ENCODE measurements at regions of chr1 and their contacts with region 1.

Region 1: DNA sequence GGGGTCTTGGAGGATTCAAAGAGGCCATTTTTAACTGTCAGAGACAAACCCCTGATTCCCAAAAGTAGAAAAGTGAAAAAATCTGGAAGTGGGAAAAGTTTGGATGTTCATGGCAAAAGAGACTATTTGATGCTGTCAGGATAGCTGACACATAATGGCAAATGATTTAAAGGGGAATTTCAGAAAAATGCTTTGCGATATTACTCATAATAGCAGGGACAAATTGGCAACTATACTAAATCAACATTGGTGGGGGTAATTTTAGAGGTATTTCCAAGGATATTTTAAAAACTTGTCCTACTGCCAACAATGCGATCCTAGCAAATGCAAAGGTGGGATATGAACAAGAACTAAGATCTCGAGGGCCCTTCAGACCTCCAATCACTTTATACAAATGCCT is 5.3 kb upstream of the GSTM4 start:
- DNase-seq: no peak
- H3K4me3 ChIP-seq: no peak overlapping the region
- H3K27ac ChIP-seq: no peak overlapping the region
- H3K4me1 ChIP-seq: peaks cover 7 to 9% (median 8%) of the 10 kb centered on the region in 4 donors
- H3K27me3 ChIP-seq: no peaks in the 10 kb centered on the region
- CTCF ChIP-seq: no peak
- EP300 ChIP-seq: no peak
- POLR2A ChIP-seq: no peak

Region 2: DNA sequence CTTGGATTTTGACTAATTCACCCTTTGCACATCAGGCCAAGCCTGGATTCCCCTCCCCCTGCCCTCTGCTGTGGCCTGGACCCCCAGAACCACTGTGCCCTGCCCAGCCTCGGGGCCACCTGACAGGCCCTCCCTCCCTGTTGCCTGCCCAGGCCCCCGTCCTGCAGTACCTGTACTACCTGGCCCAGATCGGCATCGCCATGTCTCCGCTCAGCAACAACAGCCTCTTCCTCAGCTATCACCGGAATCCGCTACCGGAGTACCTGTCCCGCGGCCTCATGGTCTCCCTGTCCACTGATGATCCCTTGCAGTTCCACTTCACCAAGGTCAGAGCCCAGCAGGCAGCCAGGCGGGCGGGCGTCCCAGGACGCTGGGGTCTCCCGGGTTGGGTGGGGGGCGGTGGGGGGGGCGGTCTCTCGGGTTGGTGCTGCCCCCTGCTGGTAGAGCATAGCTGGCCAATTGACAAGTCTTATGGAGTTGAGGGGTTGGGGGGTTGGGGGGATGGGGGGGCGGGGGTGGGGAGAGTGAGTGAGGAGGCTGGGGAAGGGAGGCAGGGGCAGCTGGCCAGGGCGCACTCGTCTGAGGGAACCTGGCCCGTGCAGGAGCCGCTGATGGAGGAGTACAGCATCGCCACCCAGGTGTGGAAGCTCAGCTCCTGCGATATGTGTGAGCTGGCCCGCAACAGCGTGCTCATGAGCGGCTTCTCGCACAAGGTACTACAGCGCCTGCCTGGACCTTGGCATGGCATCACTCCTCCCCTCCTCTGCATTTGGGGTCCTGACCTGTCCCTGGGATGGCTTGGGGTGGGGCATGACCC is 20.3 kb before region 1 on chr1:
- in situ Hi-C with region 1: no loop called
- intact Hi-C with region 1: no loop called
- DNase-seq: no peak
- H3K4me3 ChIP-seq: no peak overlapping the region
- H3K27ac ChIP-seq: no peak overlapping the region
- H3K4me1 ChIP-seq: peaks cover 3 to 20% (median 10%) of the 10 kb centered on the region in 4 donors
- H3K27me3 ChIP-seq: no peaks in the 10 kb centered on the region
- CTCF ChIP-seq: peak in 3 of 5 experiments; percentile 39 to 48 (median 45)
- EP300 ChIP-seq: no peak
- POLR2A ChIP-seq: no peak

Region 3: DNA sequence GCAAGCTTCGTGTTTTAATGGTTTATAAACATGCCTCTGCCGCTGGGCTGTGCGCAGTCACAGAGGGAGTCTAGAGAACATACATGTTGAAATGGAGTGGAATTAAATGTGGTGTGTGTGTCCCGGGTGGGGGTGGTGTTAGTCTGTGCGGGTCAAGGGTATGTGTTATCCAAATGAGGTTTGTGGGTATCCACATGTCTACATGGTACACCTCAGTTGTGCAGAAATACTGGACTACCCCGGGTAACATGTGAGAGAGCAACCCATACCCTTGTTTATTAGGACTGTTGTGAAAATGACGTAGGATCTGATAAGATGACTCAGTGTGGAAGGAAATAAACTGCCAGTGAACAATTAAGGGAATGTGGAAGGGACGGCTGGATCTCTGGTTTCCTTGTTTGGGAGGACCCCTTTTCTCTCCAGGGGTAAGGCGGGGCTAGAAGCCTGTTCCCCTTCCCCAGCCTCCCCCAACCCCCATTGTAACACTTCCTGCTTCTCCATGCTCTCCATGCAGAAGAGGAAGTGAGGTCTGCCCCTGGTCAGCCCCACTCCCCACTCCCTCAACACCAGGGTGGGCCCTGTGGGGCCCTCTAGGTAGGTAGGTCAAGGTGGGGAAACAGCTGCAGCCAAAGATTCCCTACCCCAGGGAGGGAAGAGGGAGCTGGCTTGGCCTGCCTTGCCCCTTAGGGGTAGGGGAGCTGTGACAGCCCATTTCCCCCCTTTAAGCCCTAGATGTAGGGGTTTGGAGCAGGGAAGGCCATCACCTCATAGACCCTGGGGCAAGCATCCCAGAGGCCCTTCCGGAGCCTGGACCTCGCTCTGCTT is 112.4 kb after region 1 on chr1:
- in situ Hi-C with region 1: loop called in 1 of 4 experiments (anchors 5 kb)
- intact Hi-C with region 1: no loop called
- DNase-seq: peak; percentile 47
- H3K4me3 ChIP-seq: peak overlapping the region; percentile 4 to 62 (median 50)
- H3K27ac ChIP-seq: peak overlapping the region; percentile 81 to 96 (median 90)
- H3K4me1 ChIP-seq: peaks cover 22 to 52% (median 46%) of the 10 kb centered on the region in 4 donors
- H3K27me3 ChIP-seq: no peaks in the 10 kb centered on the region
- CTCF ChIP-seq: no peak
- EP300 ChIP-seq: no peak
- POLR2A ChIP-seq: no peak

Measured in transverse colon (tissue), 4 donors.